ENCODE measurements at regions of chr4 and their contacts with region 1.

Region 1: GRCh38 chr4:39638354-39639240 is at the start of gene SMIM14:
- DNase-seq: peak; percentile 92
- ATAC-seq: peak; percentile 82
- H3K4me3 Mint-ChIP-seq: peak within 1 kb of the TSS; percentile 96
- H3K27ac Mint-ChIP-seq: peak within 1 kb of the TSS; percentile 97
- H3K4me1 Mint-ChIP-seq: peaks cover 58% of the 10 kb centered on the region
- H3K27me3 Mint-ChIP-seq: no peaks in the 10 kb centered on the region
- CTCF ChIP-seq: no peak
- total RNA-seq, gene SMIM14: 83.1 and 86.5 TPM in 2 replicates

Region 2: DNA sequence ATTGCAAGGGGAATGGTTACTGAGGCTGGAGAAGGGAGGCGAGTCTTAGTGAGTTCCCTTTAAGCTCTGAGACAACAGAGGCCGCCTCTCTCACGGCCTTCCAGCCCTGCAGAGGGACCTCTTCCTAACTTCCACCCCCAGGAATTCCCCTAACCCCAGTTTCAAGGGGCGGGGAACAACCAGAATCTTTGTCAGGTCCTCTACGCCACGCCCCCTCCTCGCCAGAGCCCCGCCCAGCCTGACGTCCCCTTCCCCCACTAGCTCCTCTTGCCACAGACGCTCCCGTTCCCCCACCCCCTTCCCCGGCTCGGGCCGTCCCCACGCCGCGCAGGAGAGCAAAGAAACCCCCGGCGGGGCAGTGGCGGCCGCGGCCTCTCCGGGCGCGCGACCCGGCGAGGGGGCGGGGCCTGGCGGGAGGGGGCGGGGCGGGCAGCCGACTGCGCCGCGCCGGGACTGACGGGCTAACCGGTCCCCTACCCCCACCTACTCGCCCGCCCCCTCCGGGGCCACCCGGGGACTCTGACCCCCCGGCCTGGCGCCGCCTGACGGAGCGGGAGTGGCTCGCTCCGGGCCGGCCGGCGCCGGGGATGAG is 594.1 kb before region 1 on chr4:
- CTCF ChIA-PET with region 1: no interaction called
- POLR2A ChIA-PET with region 1: no interaction called
- intact Hi-C with region 1: loop called (anchors 10 kb)
- DNase-seq: peak; percentile 96
- ATAC-seq: peak; percentile 86
- H3K4me3 Mint-ChIP-seq: peak overlapping the region; percentile 86
- H3K27ac Mint-ChIP-seq: peak overlapping the region; percentile 88
- H3K4me1 Mint-ChIP-seq: peaks cover 62% of the 10 kb centered on the region
- H3K27me3 Mint-ChIP-seq: no peaks in the 10 kb centered on the region
- CTCF ChIP-seq: no peak

Region 3: DNA sequence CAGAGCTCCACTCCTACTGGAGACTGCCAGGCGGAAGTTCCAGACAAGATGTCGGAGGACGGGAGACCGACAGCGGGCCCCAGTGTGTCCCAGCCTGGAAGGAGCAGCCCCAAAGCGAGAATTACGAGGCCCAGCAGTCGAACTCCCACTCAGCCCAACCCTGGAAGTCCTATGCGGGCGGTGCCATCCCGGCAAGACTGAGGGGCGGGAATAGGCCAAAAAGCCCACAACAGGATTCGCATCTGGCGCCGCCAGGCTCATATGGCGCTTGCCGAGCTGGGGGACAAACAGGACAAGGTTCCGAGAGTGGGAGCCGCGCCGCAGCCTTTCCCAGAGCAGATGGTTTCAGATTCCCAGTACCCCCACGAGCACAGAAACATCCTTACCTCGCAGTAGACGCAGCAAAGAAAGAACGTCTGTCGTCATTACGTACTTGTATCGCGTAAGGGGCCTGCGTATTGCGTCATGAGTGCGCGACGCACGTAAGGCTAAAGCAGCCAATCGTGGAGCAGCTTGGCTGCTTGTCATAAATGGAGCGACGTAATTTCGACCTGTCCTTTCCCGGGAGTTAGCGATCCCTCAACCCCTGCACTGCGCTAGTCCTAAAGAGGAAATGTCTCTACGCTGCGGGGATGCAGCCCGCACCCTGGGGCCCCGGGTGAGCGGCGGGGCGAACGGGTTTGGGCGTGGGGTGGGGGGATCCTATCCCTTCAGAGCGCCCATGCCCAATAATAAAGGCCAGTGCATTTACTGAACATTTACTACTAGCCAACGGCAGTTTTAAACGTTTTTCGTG is 179.9 kb before region 1 on chr4 and contains the starts of genes LIAS and RPL9:
- CTCF ChIA-PET with region 1: no interaction called
- POLR2A ChIA-PET with region 1: interaction called, 23 read pairs
- intact Hi-C with region 1: loop called (anchors 2 kb)
- DNase-seq: peak; percentile 90
- ATAC-seq: peak; percentile 81
- H3K4me3 Mint-ChIP-seq: peak within 1 kb of the TSS; percentile 97
- H3K27ac Mint-ChIP-seq: peak within 1 kb of the TSS; percentile 98
- H3K4me1 Mint-ChIP-seq: peaks cover 36% of the 10 kb centered on the region
- H3K27me3 Mint-ChIP-seq: no peaks in the 10 kb centered on the region
- CTCF ChIP-seq: no peak
- total RNA-seq, gene LIAS: 19.5 and 20.5 TPM in 2 replicates
- total RNA-seq, gene RPL9: 2,632 and 2,865 TPM in 2 replicates

Region 4: DNA sequence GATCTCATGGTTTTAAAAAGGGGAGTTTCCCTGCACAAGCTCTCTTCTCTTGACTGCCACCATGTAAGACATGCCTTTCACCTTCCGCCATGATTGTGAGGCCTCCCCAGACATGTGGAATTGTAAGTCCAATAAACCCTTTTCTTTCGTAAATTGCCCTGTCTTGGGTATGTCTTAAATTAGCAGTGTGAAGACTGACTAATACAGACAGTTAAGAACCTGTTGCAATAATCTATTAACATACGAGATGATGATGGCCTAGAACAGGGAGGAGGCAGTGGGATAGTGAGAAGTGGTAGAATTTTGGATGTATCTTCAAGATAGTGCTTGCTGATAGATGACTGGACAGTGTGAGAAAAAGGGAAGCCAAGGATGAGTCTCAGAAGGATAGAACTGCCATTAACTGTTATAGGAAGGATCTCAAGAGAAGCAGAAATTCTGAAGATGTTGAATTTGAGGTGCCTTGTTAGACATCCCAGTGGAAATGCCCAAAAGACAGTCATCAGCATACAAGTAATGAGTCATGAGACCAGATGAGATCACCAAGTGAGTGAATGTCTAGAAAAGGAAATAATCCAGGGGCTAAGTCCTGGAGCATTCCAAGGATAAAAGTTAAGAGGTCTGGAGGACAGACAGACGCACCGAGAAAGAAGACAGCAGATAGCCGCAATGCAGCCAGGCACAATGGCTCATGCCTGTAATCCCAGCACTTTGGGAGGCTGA is 72.6 kb before region 1 on chr4:
- CTCF ChIA-PET with region 1: no interaction called
- POLR2A ChIA-PET with region 1: interaction called, 15 read pairs
- intact Hi-C with region 1: loop called (anchors 2 kb)
- DNase-seq: no peak
- ATAC-seq: no peak
- H3K4me3 Mint-ChIP-seq: no peak overlapping the region
- H3K27ac Mint-ChIP-seq: peak overlapping the region; percentile 20
- H3K4me1 Mint-ChIP-seq: peaks cover 34% of the 10 kb centered on the region
- H3K27me3 Mint-ChIP-seq: no peaks in the 10 kb centered on the region
- CTCF ChIP-seq: no peak

Region 5: DNA sequence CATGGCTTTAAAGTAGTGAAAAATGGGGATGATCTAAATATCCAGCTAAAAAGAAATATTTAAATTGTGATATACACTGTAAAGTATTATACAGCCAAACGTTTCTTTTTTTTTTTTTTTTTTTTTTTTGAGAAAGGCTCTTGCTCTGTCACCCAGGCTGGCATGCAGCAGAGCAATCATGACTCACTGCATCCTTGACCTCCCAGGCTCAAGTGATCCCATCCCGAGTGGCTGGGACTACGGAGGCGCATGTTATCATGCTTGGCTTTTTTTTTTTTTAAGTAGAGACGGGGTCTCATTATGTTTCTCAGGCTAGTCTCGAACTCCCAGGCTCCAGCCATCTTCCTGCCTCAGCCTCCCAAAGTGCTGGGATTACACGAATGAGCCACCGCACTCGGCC is 17.0 kb before region 1 on chr4:
- CTCF ChIA-PET with region 1: interaction called, 4 read pairs
- POLR2A ChIA-PET with region 1: interaction called, 219 read pairs
- intact Hi-C with region 1: loop called (anchors 1 kb)
- DNase-seq: no peak
- ATAC-seq: no peak
- H3K4me3 Mint-ChIP-seq: peak overlapping the region; percentile 9
- H3K27ac Mint-ChIP-seq: no peak overlapping the region
- H3K4me1 Mint-ChIP-seq: peaks cover 69% of the 10 kb centered on the region
- H3K27me3 Mint-ChIP-seq: no peaks in the 10 kb centered on the region
- CTCF ChIP-seq: no peak

Region 6: DNA sequence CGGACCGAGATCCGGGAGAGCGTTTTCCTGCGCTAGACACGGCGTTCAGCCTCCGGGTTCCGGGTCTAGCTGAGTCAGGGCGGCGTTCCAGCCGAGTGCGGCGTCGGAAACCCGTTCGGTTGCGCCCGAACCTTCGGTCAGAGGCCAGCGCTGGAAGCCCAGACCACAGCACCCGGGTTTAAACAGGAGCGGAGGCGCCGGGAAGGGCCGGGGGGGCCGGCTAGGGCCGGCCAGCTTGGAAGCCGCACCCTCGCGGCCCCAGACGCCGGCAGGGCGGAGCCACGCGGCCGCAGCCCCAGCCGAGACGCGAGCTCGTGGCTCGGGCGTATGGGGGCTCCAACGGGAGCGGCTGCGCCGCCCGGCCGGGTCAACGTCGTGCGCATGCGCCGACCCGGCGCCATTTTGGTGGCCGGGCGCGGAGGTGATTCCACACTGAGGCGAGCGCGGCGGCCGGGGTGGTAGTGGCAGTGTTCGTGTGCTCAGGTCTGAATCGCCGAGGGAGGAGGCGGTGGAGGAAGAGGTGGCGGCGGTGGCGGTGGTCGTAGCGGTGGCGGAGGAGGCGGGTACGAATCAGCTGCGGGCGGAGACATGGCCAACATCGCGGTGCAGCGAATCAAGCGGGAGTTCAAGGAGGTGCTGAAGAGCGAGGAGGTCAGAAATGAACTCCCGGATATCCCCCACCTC is 59.3 kb after region 1 on chr4 and contains the start of gene UBE2K:
- CTCF ChIA-PET with region 1: no interaction called
- POLR2A ChIA-PET with region 1: interaction called, 40 read pairs
- intact Hi-C with region 1: loop called (anchors 1 kb)
- DNase-seq: peak; percentile 93
- ATAC-seq: peak; percentile 89
- H3K4me3 Mint-ChIP-seq: peak within 1 kb of the TSS; percentile 99
- H3K27ac Mint-ChIP-seq: peak within 1 kb of the TSS; percentile 96
- H3K4me1 Mint-ChIP-seq: peaks cover 48% of the 10 kb centered on the region
- H3K27me3 Mint-ChIP-seq: no peaks in the 10 kb centered on the region
- CTCF ChIP-seq: no peak
- total RNA-seq, gene UBE2K: 54.4 and 64.0 TPM in 2 replicates

Measured in activated B cell treated with CpG ODN at 0.5 μM for 24 hours (primary cell).